Activated CD4-positive, alpha-beta T cell treated with anti-CD3 and anti-CD28 coated beads, Interleukin-2, amount 10 ng/mL, durations not matched to agents 24 days and 14 days (primary cell): ENCODE measurements at regions of chr3 and their contacts with region 1.

Region 1: DNA sequence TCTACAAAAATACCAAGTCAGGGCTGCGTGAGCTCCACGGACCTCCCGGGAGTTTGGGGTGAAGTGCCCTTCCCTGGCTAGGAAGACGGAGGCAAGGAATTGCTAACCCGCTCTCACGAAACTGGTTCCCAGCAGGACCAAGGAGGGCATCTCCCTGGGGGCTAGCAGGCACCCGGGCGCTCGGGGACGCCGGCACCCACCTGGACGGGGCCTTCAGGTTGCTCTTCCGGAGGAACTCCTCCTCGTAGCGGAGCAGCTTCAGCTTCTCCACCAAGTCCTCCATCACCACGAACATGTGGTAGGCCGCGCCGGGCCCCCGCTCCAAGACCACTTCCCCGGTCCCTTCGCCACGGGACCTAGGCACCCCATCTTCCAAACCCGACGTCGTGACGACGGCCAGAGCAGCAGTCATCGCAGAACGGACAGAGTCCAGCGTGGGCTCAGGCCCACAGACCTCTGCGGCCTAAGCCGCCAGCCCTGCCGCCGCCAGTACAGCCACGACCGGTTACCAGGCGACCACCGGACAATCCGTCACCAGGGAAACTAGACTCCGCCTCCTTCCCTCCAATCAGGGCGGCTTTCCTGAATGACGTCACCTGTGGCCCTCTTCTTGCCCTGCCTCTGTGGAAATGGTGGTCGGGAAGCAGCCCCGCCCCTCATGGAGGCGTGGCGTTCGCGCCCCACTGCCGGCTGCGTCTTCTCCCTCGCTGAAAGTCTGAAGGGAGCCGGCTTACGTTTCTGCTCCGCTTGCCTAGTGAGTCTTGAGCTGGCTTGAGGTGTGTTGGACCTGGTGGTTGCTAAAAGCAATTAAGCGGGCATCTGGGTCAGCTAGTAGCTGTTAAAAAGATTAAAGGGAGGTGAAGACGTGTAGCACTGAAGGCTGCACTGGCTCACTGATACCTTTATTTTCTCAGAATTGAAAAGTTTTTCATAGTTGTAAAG is at the start of gene IFT57:
- DNase-seq: peak; percentile 98
- H3K4me3 Mint-ChIP-seq: peak within 1 kb of the TSS; percentile 100
- H3K27ac Mint-ChIP-seq: peak within 1 kb of the TSS; percentile 95
- H3K4me1 Mint-ChIP-seq: peaks cover 46% of the 10 kb centered on the region
- H3K27me3 Mint-ChIP-seq: no peaks in the 10 kb centered on the region
- total RNA-seq, gene IFT57: 25.2 and 26.6 TPM in 2 replicates

Region 2: GRCh38 chr3:108090701-108091451 is 131.3 kb before region 1 on chr3 and contains the start of gene CD47:
- intact Hi-C with region 1: loop called (anchors 1 kb)
- DNase-seq: peak; percentile 99
- H3K4me3 Mint-ChIP-seq: peak within 1 kb of the TSS; percentile 98
- H3K27ac Mint-ChIP-seq: peak within 1 kb of the TSS; percentile 100
- H3K4me1 Mint-ChIP-seq: peaks cover 35% of the 10 kb centered on the region
- H3K27me3 Mint-ChIP-seq: no peaks in the 10 kb centered on the region
- total RNA-seq, gene CD47: 104 and 109 TPM in 2 replicates

Region 3: DNA sequence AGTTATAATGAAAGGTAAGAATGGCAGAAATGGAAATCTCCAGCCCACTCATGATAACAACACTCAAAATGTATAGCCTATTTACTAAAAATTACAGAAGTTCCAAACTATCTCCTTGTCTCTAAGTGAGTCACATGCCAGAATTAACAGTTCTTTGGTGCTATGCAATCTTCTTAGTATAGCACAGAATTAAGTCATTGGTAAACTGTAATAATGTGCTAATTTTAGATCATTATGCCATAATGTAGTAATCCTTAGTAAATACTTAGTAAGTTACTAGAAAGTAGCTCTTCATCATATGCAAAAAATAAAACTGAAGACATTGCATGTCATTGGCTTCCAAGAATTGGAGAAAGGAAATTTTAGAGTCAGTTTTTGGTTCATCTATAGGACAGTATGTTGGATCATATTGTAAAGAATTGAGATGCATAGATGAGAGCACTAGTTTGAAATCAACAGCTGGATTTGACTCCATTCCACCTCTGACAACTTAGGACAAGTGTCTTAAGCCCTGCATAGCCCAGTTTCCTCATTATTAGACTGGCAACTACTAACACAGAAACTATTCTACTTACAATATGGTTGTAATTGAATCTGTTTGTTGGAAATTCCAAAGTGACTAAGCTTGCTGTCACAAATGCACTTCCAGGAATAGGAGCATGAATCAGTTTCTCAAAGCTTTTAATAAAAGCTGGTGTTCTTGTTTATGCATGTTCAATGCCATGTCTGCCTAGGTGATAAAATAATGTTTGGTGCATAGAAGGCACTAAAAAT is 91.3 kb before region 1 on chr3:
- intact Hi-C with region 1: loop called (anchors 2 kb)
- DNase-seq: no peak
- H3K4me3 Mint-ChIP-seq: peak overlapping the region; percentile 57
- H3K27ac Mint-ChIP-seq: peak overlapping the region; percentile 78
- H3K4me1 Mint-ChIP-seq: peaks cover 81% of the 10 kb centered on the region
- H3K27me3 Mint-ChIP-seq: no peaks in the 10 kb centered on the region

Region 4: DNA sequence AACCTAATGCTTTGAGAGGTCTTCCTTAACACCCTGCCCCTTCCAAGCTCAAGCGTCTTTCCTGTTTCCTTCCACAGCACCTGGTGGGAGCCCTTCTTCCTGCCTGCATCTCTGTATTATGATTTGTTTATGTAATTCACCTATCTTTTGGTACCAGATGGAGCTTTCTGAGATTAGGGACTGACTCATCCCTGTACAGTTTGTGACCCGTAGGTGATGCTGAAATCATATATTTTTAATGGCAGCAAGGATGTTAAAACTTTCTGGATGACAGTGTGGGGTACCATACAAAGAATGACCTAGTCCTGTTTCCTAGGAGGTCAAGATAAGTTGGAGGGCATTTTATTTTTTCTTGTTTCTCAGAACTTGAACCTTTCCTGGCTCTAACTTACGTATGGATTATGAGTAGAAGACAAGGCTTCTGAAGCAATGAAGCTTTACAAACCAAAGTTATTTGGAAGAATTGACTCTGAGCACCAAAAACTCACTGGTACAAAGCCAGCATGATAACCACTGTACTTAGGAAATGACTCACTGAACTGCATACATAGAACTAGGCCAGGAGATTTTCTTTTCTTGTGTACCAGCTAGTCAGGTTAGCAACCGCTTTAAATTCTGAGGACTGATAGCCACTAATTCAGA is 120.8 kb after region 1 on chr3:
- intact Hi-C with region 1: loop called (anchors 2 kb)
- DNase-seq: peak; percentile 58
- H3K4me3 Mint-ChIP-seq: peak overlapping the region; percentile 15
- H3K27ac Mint-ChIP-seq: peak overlapping the region; percentile 79
- H3K4me1 Mint-ChIP-seq: peaks cover 23% of the 10 kb centered on the region
- H3K27me3 Mint-ChIP-seq: peaks cover 7% of the 10 kb centered on the region

Region 5: GRCh38 chr3:108406661-108407206 is 184.6 kb after region 1 on chr3:
- intact Hi-C with region 1: loop called (anchors 5 kb)
- DNase-seq: peak; percentile 73
- H3K4me3 Mint-ChIP-seq: no peak overlapping the region
- H3K27ac Mint-ChIP-seq: no peak overlapping the region
- H3K4me1 Mint-ChIP-seq: no peaks in the 10 kb centered on the region
- H3K27me3 Mint-ChIP-seq: peaks cover 3% of the 10 kb centered on the region

Region 6: DNA sequence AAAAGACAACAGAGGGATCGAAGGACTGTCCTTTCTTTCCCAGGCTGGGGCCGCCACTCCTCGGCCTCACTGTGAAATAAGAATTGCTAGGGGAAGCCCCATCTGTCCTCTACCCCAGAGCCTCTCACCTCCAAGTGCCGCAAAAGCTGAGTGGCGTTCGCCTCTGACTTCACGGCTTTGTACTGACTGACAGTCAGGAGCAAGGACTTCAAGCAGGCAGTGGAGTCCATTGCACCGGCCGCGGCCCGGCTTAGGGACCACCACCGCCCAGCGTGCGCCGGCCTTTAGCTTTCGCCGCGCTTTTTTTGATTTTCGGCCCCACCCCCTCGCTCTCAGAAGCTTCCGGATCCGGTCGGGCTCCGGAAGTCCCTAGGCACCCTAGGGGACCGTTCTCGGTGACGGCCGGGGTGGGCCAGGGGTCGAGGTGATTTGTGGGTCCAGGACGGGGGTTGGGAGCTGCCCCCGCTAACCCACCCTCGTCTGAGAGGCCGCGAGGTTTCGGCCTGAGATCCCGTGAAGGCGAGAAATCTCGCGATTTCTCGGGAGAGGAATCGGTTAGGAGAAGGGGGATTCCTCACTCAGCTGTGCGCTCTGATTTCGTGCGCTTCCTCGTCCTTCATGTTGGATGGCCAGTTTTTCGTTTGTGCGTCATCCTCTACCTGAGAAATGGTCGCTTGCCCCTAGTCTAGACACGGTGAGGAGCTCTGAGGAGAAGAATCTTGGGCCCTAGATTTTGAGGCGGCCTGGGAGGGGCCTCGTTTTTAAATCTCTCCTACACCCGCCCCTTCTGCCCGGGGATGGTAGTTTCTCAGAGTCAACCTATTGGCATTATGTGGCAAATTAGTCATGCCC is 367.2 kb after region 1 on chr3 and contains the starts of genes CIP2A and DZIP3:
- intact Hi-C with region 1: loop called (anchors 1 kb)
- DNase-seq: peak; percentile 95
- H3K4me3 Mint-ChIP-seq: peak within 1 kb of the TSS; percentile 97
- H3K27ac Mint-ChIP-seq: peak within 1 kb of the TSS; percentile 98
- H3K4me1 Mint-ChIP-seq: peaks cover 45% of the 10 kb centered on the region
- H3K27me3 Mint-ChIP-seq: no peaks in the 10 kb centered on the region
- total RNA-seq, gene CIP2A: 48.3 and 58.3 TPM in 2 replicates
- total RNA-seq, gene DZIP3: 4.1 and 4.7 TPM in 2 replicates